IMR-90 (cell line): ENCODE measurements at regions of chr6 and their contacts with region 1.

Region 1: GRCh38 chr6:166999145-166999883 is at the start of gene CEP43:
- DNase-seq: peak; percentile 93
- ATAC-seq: peak; percentile 97
- H3K4me3 ChIP-seq: peak within 1 kb of the TSS; percentile 84
- H3K27ac ChIP-seq: peak within 1 kb of the TSS; percentile 70
- H3K4me1 ChIP-seq: peaks cover 9% of the 10 kb centered on the region
- H3K27me3 ChIP-seq: no peaks in the 10 kb centered on the region
- CTCF ChIP-seq: no peak
- POLR2A ChIP-seq: no peak
- RAD21 ChIP-seq: no peak
- total RNA-seq, gene CEP43: 8.6 and 19.4 TPM in 2 replicates

Region 2: DNA sequence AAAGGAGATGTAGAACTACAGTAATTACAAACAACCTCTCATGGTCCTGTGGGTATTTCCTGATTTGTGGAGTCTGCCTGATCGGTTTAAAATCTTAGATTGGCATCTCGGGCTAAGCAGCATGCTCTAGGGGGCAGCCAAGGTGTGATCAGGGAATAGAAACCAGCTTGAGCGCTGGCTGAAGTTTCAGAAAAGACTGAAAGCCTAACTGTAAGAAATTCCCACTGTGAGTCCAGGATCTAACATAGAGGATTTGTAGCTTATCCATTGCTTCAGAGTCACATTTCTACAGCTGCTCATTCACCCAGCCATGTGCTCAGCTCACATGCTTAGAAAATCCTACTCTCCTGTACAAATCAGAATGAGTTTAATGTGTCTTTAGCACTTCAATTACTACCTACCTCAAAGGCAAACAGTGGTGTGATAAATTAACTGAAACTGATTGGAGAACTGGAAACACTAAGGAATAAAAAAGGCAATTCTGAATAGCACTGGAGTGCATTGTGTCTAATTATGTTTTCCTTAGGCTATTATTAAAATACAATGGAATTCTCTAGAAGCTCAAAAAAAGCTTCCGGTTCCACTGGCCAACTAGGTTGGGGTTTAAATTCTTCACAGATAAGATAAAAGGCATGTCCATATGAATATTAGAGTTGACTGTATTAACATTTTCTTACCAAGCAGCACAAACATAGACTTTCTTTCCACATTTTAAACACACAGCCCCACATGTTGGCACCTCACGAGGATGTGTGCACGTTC is 542.7 kb before region 1 on chr6:
- CTCF ChIA-PET with region 1: no interaction called
- POLR2A ChIA-PET with region 1: no interaction called
- dilution Hi-C with region 1: no loop called
- in situ Hi-C with region 1: no loop called
- intact Hi-C with region 1: loop called (anchors 10 kb)
- DNase-seq: peak; percentile 5
- ATAC-seq: peak; percentile 32; the same call in 1 of the 2 replicates
- H3K4me3 ChIP-seq: no peak overlapping the region
- H3K27ac ChIP-seq: no peak overlapping the region
- H3K4me1 ChIP-seq: no peaks in the 10 kb centered on the region
- H3K27me3 ChIP-seq: no peaks in the 10 kb centered on the region
- CTCF ChIP-seq: 0 out of 2 replicates have a peak, but pooled peaks have one; percentile 16
- POLR2A ChIP-seq: no peak
- RAD21 ChIP-seq: peak; percentile 25; the same call in 1 of the 2 replicates

Region 3: DNA sequence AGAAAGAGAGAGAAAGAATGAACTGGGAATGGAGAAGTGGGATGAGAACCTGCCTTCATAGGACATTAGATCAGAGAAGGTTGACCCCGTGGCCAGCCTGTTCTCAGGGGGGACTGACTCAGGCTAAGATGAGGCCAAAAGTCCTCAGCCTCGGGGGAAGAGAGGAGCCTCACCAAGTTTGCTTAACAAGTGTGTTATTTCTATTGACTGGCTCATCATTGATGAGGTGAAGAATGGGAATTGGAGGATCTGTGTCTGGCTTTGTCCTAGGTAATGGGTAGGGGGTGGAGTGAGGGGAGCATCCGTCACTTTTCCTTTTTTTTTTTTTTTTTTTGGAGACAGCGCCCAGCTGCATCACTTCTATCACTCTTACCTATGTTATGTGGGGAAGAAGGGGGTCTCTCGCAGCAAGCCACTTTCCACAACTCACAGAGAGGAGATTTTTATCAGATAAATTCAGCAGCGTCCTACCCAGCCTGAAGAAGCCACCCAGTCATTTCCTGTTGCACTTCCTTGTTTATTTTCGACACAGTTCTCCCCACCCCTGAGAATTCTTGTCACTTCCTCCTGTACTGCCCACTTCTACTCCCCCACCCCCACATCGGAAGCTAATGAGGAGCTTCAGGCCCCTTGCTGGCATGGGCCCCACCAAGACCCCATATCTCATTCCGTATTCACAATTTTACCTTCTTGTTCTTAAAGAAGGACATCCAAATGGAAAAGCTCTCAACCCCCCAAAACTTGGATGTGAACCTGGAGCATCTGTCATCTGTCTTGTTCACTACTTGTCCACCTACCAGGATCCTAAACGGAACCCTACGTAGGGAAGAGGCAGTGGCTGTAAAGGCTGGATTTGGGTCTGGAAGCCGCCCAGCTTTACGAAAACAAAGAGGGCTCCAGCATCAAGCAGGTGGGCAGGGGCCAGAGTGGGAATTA is 40.1 kb before region 1 on chr6:
- CTCF ChIA-PET with region 1: no interaction called
- POLR2A ChIA-PET with region 1: no interaction called
- dilution Hi-C with region 1: no loop called
- in situ Hi-C with region 1: no loop called
- intact Hi-C with region 1: loop called (anchors 1 kb)
- DNase-seq: no peak
- ATAC-seq: no peak
- H3K4me3 ChIP-seq: no peak overlapping the region
- H3K27ac ChIP-seq: no peak overlapping the region
- H3K4me1 ChIP-seq: peaks cover 10% of the 10 kb centered on the region
- H3K27me3 ChIP-seq: no peaks in the 10 kb centered on the region
- CTCF ChIP-seq: no peak
- POLR2A ChIP-seq: no peak
- RAD21 ChIP-seq: no peak